ENCODE measurements at regions of chr2 and their contacts with region 1.

Region 1: DNA sequence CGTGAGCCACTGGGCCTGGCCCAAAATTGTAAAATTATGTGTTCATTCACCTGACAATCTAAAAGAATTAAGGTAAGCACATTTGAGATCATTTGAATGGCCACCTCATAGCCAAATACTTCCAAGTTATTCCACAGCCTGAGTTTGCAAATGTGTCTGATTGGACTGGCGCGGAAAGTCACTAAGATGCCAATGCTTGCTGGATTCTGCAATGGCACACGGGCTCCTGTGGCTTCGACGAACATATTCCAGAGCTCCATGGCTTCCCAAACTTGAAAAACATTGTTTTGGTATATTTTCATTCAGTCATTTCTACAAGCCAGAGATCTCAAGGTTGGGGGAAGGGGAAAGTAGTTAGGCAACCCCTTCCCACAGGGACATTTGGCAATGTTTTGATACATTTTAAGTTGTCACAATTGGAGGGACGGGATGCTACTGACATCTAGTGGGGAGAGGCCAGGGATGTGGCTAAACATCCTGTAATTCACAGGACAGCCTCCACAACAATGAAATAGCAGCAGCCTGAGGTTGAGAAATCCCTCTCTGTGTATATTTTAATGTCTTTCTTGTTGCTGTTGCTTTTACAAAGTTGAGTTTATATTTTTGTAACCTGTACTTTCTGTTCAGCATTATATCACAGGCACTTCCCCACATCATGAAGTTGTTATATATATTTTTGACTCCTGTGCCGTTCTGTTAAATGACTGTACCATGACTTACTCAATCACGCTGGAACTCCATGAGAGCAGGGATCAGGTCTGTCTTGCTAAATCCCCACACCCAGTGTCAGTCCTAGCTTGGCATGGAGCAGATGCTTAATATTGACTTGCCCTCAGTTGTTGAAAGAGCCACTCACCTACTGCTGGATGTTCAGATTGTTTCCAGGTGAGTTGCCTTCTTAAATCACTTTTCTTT is 56.9 kb downstream of the COL4A4 start:
- DNase-seq: no peak
- ATAC-seq: peak; percentile 86
- H3K4me3 ChIP-seq: no peak overlapping the region
- H3K27ac ChIP-seq: no peak overlapping the region
- H3K4me1 ChIP-seq: no peaks in the 10 kb centered on the region
- H3K27me3 ChIP-seq: no peaks in the 10 kb centered on the region
- CTCF ChIP-seq: peak; percentile 70 to 83 (median 71)
- EP300 ChIP-seq: no peak
- POLR2A ChIP-seq: no peak
- RAD21 ChIP-seq: peak; percentile 85

Region 2: GRCh38 chr2:225660262-225661131 is 1446.6 kb before region 1 on chr2:
- CTCF ChIA-PET with region 1: interaction called, 3 read pairs
- POLR2A ChIA-PET with region 1: no interaction called
- RAD21 ChIA-PET with region 1: no interaction called
- SMC1A ChIA-PET with region 1: no interaction called
- in situ Hi-C with region 1: loop called (anchors 5 kb)
- intact Hi-C with region 1: no loop called
- DNase-seq: peak; percentile 9
- ATAC-seq: peak; percentile 95
- H3K4me3 ChIP-seq: no peak overlapping the region
- H3K27ac ChIP-seq: no peak overlapping the region
- H3K4me1 ChIP-seq: no peaks in the 10 kb centered on the region
- H3K27me3 ChIP-seq: no peaks in the 10 kb centered on the region
- CTCF ChIP-seq: peak; percentile 85 to 90 (median 86)
- EP300 ChIP-seq: no peak
- POLR2A ChIP-seq: no peak
- RAD21 ChIP-seq: peak; percentile 94

Region 3: GRCh38 chr2:225668606-225669266 is 1438.4 kb before region 1 on chr2:
- CTCF ChIA-PET with region 1: interaction called, 3 read pairs
- POLR2A ChIA-PET with region 1: no interaction called
- RAD21 ChIA-PET with region 1: interaction called, 3 read pairs
- SMC1A ChIA-PET with region 1: no interaction called
- in situ Hi-C with region 1: loop called (anchors 5 kb)
- intact Hi-C with region 1: loop called (anchors 2 kb)
- DNase-seq: peak; percentile 12
- ATAC-seq: peak; percentile 94
- H3K4me3 ChIP-seq: no peak overlapping the region
- H3K27ac ChIP-seq: no peak overlapping the region
- H3K4me1 ChIP-seq: no peaks in the 10 kb centered on the region
- H3K27me3 ChIP-seq: no peaks in the 10 kb centered on the region
- CTCF ChIP-seq: peak; percentile 72 to 75 (median 73)
- EP300 ChIP-seq: no peak
- POLR2A ChIP-seq: no peak
- RAD21 ChIP-seq: peak; percentile 71

Region 4: DNA sequence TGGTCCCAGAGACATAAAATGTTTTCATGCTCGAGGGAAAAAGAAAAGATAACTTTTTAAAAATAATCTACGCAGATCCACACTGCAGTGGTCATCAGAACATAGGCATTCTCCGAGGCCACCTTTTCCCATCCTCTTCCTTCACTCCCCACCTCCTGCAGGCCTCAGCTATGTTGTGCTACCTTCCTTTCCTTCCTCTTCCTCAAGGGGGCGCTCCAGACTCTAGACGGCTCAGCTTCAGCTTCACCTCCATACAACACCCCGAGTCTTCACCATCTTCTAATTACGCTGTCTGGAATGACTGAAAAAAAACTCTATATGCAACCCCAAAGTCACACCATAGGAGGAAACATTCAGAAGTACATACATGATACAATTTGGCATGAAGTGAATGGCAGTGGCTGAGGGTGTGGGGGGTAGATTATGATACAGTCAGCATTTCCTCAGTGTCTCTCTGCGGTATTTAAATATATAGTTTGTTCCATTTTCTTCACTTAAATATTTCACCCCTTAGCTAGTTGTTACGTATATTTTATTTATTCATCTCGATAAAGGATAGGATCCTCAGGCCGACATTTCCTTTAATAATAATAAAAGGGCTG is 891.1 kb before region 1 on chr2:
- CTCF ChIA-PET with region 1: no interaction called
- POLR2A ChIA-PET with region 1: no interaction called
- RAD21 ChIA-PET with region 1: no interaction called
- SMC1A ChIA-PET with region 1: interaction called, 3 read pairs
- in situ Hi-C with region 1: no loop called
- intact Hi-C with region 1: loop called (anchors 5 kb)
- DNase-seq: no peak
- ATAC-seq: peak; percentile 96
- H3K4me3 ChIP-seq: no peak overlapping the region
- H3K27ac ChIP-seq: no peak overlapping the region
- H3K4me1 ChIP-seq: no peaks in the 10 kb centered on the region
- H3K27me3 ChIP-seq: no peaks in the 10 kb centered on the region
- CTCF ChIP-seq: peak; percentile 56 to 64 (median 59)
- EP300 ChIP-seq: no peak
- POLR2A ChIP-seq: no peak
- RAD21 ChIP-seq: peak; percentile 81

Region 5: GRCh38 chr2:227038550-227039189 is 68.4 kb before region 1 on chr2:
- CTCF ChIA-PET with region 1: no interaction called
- POLR2A ChIA-PET with region 1: no interaction called
- RAD21 ChIA-PET with region 1: no interaction called
- SMC1A ChIA-PET with region 1: no interaction called
- in situ Hi-C with region 1: no loop called
- intact Hi-C with region 1: loop called (anchors 5 kb)
- DNase-seq: no peak
- ATAC-seq: no peak
- H3K4me3 ChIP-seq: no peak overlapping the region
- H3K27ac ChIP-seq: no peak overlapping the region
- H3K4me1 ChIP-seq: no peaks in the 10 kb centered on the region
- H3K27me3 ChIP-seq: no peaks in the 10 kb centered on the region
- CTCF ChIP-seq: peak in 1 of 3 experiments; percentile 22; a peak in 1 of 6 replicates
- EP300 ChIP-seq: no peak
- POLR2A ChIP-seq: no peak
- RAD21 ChIP-seq: 0 out of 2 replicates have a peak, but pooled peaks have one; percentile 11

Measured in GM12878 (cell line).